Gastrocnemius medialis (tissue), 4 donors: ENCODE measurements at regions of chr6 and their contacts with region 1.

Region 1: GRCh38 chr6:148464319-148465010 is 121.8 kb downstream of the SASH1 start:
- DNase-seq: peak; percentile 35 to 45
- ATAC-seq: peak; percentile 73 to 83
- H3K4me3 ChIP-seq: no peak overlapping the region
- H3K27ac ChIP-seq: peak overlapping the region; percentile 3 to 69 (median 38)
- H3K4me1 ChIP-seq: peaks cover 9 to 26% of the 10 kb centered on the region in 2 donors
- H3K27me3 ChIP-seq: no peaks in the 10 kb centered on the region
- CTCF ChIP-seq: peak; percentile 77 to 90 (median 82)
- POLR2A ChIP-seq: no peak

Region 2: GRCh38 chr6:147506704-147507114 is 957.8 kb before region 1 on chr6:
- in situ Hi-C with region 1: loop called in 1 of 4 experiments (anchors 25 kb)
- intact Hi-C with region 1: loop called (anchors 5 kb)
- DNase-seq: no peak
- ATAC-seq: peak in 1 of 2 donors; percentile 49
- H3K4me3 ChIP-seq: peak overlapping the region; percentile 57 to 69 (median 60)
- H3K27ac ChIP-seq: no peak overlapping the region
- H3K4me1 ChIP-seq: peaks cover 8 to 20% of the 10 kb centered on the region in 2 donors
- H3K27me3 ChIP-seq: peaks cover 27 to 46% (median 37%) of the 10 kb centered on the region in 3 donors
- CTCF ChIP-seq: peak; percentile 41 to 78 (median 68)
- POLR2A ChIP-seq: no peak

Region 3: GRCh38 chr6:148144917-148145521 is 319.4 kb before region 1 on chr6:
- in situ Hi-C with region 1: no loop called
- intact Hi-C with region 1: loop called (anchors 1 kb)
- DNase-seq: peak; percentile 7 to 31
- ATAC-seq: no peak
- H3K4me3 ChIP-seq: peak overlapping the region in 1 of 4 donors; percentile 23
- H3K27ac ChIP-seq: no peak overlapping the region
- H3K4me1 ChIP-seq: no peaks in the 10 kb centered on the region
- H3K27me3 ChIP-seq: no peaks in the 10 kb centered on the region
- CTCF ChIP-seq: peak; percentile 42 to 71 (median 44)
- POLR2A ChIP-seq: no peak

Region 4: GRCh38 chr6:148166339-148166968 is 298.0 kb before region 1 on chr6:
- in situ Hi-C with region 1: loop called in 2 of 4 experiments (anchors 5 to 10 kb)
- intact Hi-C with region 1: no loop called
- DNase-seq: no peak
- ATAC-seq: no peak
- H3K4me3 ChIP-seq: no peak overlapping the region
- H3K27ac ChIP-seq: no peak overlapping the region
- H3K4me1 ChIP-seq: no peaks in the 10 kb centered on the region
- H3K27me3 ChIP-seq: no peaks in the 10 kb centered on the region
- CTCF ChIP-seq: peak; percentile 26 to 62 (median 40)
- POLR2A ChIP-seq: no peak

Region 5: GRCh38 chr6:148177589-148178233 is 286.8 kb before region 1 on chr6:
- in situ Hi-C with region 1: loop called in 3 of 4 experiments (anchors 5 to 10 kb)
- intact Hi-C with region 1: loop called (anchors 1 kb)
- DNase-seq: peak in 1 of 2 donors; percentile 21
- ATAC-seq: no peak
- H3K4me3 ChIP-seq: no peak overlapping the region
- H3K27ac ChIP-seq: no peak overlapping the region
- H3K4me1 ChIP-seq: no peaks in the 10 kb centered on the region
- H3K27me3 ChIP-seq: no peaks in the 10 kb centered on the region
- CTCF ChIP-seq: peak; percentile 43 to 76 (median 74)
- POLR2A ChIP-seq: no peak

Region 6: GRCh38 chr6:148250975-148251685 is 213.3 kb before region 1 on chr6:
- in situ Hi-C with region 1: no loop called
- intact Hi-C with region 1: loop called (anchors 5 kb)
- DNase-seq: no peak
- ATAC-seq: peak; percentile 46 to 86
- H3K4me3 ChIP-seq: no peak overlapping the region
- H3K27ac ChIP-seq: no peak overlapping the region
- H3K4me1 ChIP-seq: no peaks in the 10 kb centered on the region
- H3K27me3 ChIP-seq: no peaks in the 10 kb centered on the region
- CTCF ChIP-seq: peak in 3 of 5 experiments; percentile 19 to 37 (median 30)
- POLR2A ChIP-seq: no peak

Region 7: GRCh38 chr6:148342357-148343046 is 122.0 kb before region 1 on chr6 and contains the start of gene SASH1:
- in situ Hi-C with region 1: no loop called
- intact Hi-C with region 1: loop called (anchors 5 kb)
- DNase-seq: peak; percentile 35 to 43
- ATAC-seq: peak; percentile 88 to 91
- H3K4me3 ChIP-seq: peak within 1 kb of the TSS; percentile 65 to 67 (median 66)
- H3K27ac ChIP-seq: peak within 1 kb of the TSS; percentile 79 to 84 (median 82)
- H3K4me1 ChIP-seq: peaks cover 4 to 7% of the 10 kb centered on the region in 2 donors
- H3K27me3 ChIP-seq: peaks cover 0 to 6% (median 0%) of the 10 kb centered on the region in 3 donors
- CTCF ChIP-seq: no peak
- POLR2A ChIP-seq: peak; percentile 44 to 67
- total RNA-seq, gene SASH1: 28.2 to 42.4 (median 35.4) TPM